GM12878 (cell line): ENCODE measurements at regions of chr11 and their contacts with region 1.

Region 1: GRCh38 chr11:59171508-59172322 is at the start of gene DTX4:
- DNase-seq: peak; percentile 57
- ATAC-seq: peak; percentile 76
- H3K4me3 ChIP-seq: peak within 1 kb of the TSS; percentile 93
- H3K27ac ChIP-seq: peak within 1 kb of the TSS; percentile 84
- H3K4me1 ChIP-seq: peaks cover 6% of the 10 kb centered on the region
- H3K27me3 ChIP-seq: no peaks in the 10 kb centered on the region
- CTCF ChIP-seq: peak; percentile 97 to 98 (median 97)
- EP300 ChIP-seq: no peak
- POLR2A ChIP-seq: 0 out of 2 replicates have a peak, but pooled peaks have one; percentile 69
- RAD21 ChIP-seq: peak; percentile 92
- polyA plus RNA-seq, gene DTX4: 5.9 to 6.9 TPM

Region 2: GRCh38 chr11:58813693-58814092 is 358.0 kb before region 1 on chr11:
- CTCF ChIA-PET with region 1: no interaction called
- POLR2A ChIA-PET with region 1: no interaction called
- RAD21 ChIA-PET with region 1: no interaction called
- SMC1A ChIA-PET with region 1: no interaction called
- in situ Hi-C with region 1: no loop called
- intact Hi-C with region 1: no loop called
- DNase-seq: no peak
- ATAC-seq: no peak
- H3K4me3 ChIP-seq: no peak overlapping the region
- H3K27ac ChIP-seq: no peak overlapping the region
- H3K4me1 ChIP-seq: no peaks in the 10 kb centered on the region
- H3K27me3 ChIP-seq: no peaks in the 10 kb centered on the region
- CTCF ChIP-seq: no peak
- EP300 ChIP-seq: no peak
- POLR2A ChIP-seq: no peak
- RAD21 ChIP-seq: no peak

Region 3: DNA sequence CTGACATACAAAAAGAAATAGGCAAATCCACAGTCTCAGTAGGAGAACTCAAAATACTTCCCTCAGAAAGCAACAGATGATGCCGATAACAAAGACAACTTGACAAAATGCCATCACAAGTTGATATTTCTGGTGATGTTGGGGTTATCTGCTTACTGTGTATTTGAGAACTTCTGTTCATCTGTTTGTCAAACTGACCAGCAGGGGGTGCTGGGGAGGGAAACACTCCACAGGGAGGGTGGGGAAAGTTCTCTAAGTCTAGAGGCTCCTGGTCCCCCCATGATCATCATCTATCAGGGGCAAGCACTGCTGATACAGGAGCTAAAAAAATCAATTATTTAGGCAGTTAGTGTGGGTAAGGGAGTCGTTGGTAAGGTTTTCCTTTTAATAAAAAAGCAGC is 213.2 kb before region 1 on chr11:
- CTCF ChIA-PET with region 1: no interaction called
- POLR2A ChIA-PET with region 1: no interaction called
- RAD21 ChIA-PET with region 1: no interaction called
- SMC1A ChIA-PET with region 1: no interaction called
- in situ Hi-C with region 1: no loop called
- intact Hi-C with region 1: no loop called
- DNase-seq: peak; percentile 2
- ATAC-seq: peak; percentile 92
- H3K4me3 ChIP-seq: no peak overlapping the region
- H3K27ac ChIP-seq: no peak overlapping the region
- H3K4me1 ChIP-seq: peaks cover 3% of the 10 kb centered on the region; the same call in 1 of the 2 replicates
- H3K27me3 ChIP-seq: no peaks in the 10 kb centered on the region
- CTCF ChIP-seq: peak; percentile 46 to 60 (median 51)
- EP300 ChIP-seq: no peak
- POLR2A ChIP-seq: no peak
- RAD21 ChIP-seq: peak; percentile 53

Region 4: GRCh38 chr11:59088162-59088561 is 83.6 kb before region 1 on chr11:
- CTCF ChIA-PET with region 1: no interaction called
- POLR2A ChIA-PET with region 1: no interaction called
- RAD21 ChIA-PET with region 1: no interaction called
- SMC1A ChIA-PET with region 1: no interaction called
- in situ Hi-C with region 1: no loop called
- intact Hi-C with region 1: no loop called
- DNase-seq: no peak
- ATAC-seq: peak; percentile 30; the same call in 1 of the 3 replicates
- H3K4me3 ChIP-seq: no peak overlapping the region
- H3K27ac ChIP-seq: no peak overlapping the region
- H3K4me1 ChIP-seq: no peaks in the 10 kb centered on the region
- H3K27me3 ChIP-seq: no peaks in the 10 kb centered on the region
- CTCF ChIP-seq: no peak
- EP300 ChIP-seq: no peak
- POLR2A ChIP-seq: no peak
- RAD21 ChIP-seq: no peak

Region 5: GRCh38 chr11:59142530-59143507 is 28.9 kb before region 1 on chr11 and contains the start of gene FAM111A:
- CTCF ChIA-PET with region 1: interaction called, 17 read pairs
- POLR2A ChIA-PET with region 1: interaction called, 11 read pairs
- RAD21 ChIA-PET with region 1: interaction called, 9 read pairs
- SMC1A ChIA-PET with region 1: interaction called, 4 read pairs
- in situ Hi-C with region 1: no loop called
- intact Hi-C with region 1: no loop called
- DNase-seq: peak; percentile 69
- ATAC-seq: peak; percentile 85
- H3K4me3 ChIP-seq: peak within 1 kb of the TSS; percentile 83
- H3K27ac ChIP-seq: peak within 1 kb of the TSS; percentile 91
- H3K4me1 ChIP-seq: peaks cover 21% of the 10 kb centered on the region; the same call in 1 of the 2 replicates
- H3K27me3 ChIP-seq: no peaks in the 10 kb centered on the region
- CTCF ChIP-seq: peak; percentile 39 to 54 (median 39)
- EP300 ChIP-seq: no peak
- POLR2A ChIP-seq: peak; percentile 73; the same call in 1 of the 2 replicates
- RAD21 ChIP-seq: peak; percentile 44; the same call in 1 of the 2 replicates
- polyA plus RNA-seq, gene FAM111A: 26.6 to 41.6 TPM

Region 6: DNA sequence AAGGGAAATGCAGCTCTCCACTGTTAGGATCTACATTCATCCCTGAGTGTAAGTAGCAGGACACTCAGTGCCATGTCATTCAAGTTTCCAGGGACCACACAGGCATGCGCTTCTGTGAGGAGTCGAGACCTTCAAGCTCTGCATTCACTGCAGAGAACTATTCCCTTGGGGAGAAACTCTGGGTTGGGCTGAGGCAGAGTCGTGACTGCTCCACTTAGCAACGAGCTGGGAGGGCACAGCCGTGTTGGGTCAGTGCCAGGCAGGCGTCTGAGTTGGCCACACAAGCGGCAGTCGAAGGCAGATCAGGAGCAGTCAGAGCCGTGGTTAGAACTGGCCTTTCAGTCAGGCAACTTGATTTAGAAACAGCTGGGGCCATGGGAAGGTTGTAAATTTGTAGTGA is 26.3 kb after region 1 on chr11:
- CTCF ChIA-PET with region 1: interaction called, 1,180 read pairs
- POLR2A ChIA-PET with region 1: interaction called, 19 read pairs
- RAD21 ChIA-PET with region 1: interaction called, 183 read pairs
- SMC1A ChIA-PET with region 1: interaction called, 155 read pairs
- in situ Hi-C with region 1: no loop called
- intact Hi-C with region 1: loop called (anchors 1 kb)
- DNase-seq: no peak
- ATAC-seq: no peak
- H3K4me3 ChIP-seq: no peak overlapping the region
- H3K27ac ChIP-seq: peak overlapping the region; percentile 94
- H3K4me1 ChIP-seq: peaks cover 35% of the 10 kb centered on the region
- H3K27me3 ChIP-seq: no peaks in the 10 kb centered on the region
- CTCF ChIP-seq: no peak
- EP300 ChIP-seq: no peak
- POLR2A ChIP-seq: no peak
- RAD21 ChIP-seq: no peak

Region 7: DNA sequence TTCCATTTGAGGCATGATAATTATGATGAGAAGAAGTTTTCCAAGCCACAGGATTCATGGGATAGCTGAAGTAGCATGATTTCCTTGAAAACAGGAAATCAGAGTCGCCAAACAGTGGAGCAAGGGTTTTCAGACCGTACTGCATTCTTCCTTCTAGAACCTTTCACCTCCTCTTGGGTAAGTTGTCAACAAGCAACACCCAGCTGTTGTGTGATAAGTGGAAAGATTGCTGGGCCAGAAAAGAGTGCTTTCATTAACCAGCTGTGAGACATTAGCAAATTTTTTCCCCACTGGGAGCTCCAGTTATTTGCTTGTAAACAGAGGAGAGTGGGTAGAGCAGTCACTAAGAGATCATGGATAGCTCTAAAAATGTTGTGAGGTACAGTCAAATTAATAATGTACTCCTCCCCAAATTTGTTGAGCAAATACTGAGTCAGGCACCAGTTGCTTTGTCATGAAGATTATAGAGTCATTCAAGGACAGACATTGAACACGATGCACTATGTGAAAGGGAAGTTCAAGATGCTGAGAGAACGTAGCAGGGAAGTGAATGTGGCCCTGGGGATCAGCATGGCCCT is 52.7 kb after region 1 on chr11:
- CTCF ChIA-PET with region 1: interaction called, 29 read pairs
- POLR2A ChIA-PET with region 1: no interaction called
- RAD21 ChIA-PET with region 1: interaction called, 15 read pairs
- SMC1A ChIA-PET with region 1: interaction called, 4 read pairs
- in situ Hi-C with region 1: no loop called
- intact Hi-C with region 1: no loop called
- DNase-seq: no peak
- ATAC-seq: peak; percentile 49
- H3K4me3 ChIP-seq: no peak overlapping the region
- H3K27ac ChIP-seq: peak overlapping the region; percentile 50
- H3K4me1 ChIP-seq: peaks cover 45% of the 10 kb centered on the region
- H3K27me3 ChIP-seq: no peaks in the 10 kb centered on the region
- CTCF ChIP-seq: no peak
- EP300 ChIP-seq: no peak
- POLR2A ChIP-seq: no peak
- RAD21 ChIP-seq: no peak

Region 8: DNA sequence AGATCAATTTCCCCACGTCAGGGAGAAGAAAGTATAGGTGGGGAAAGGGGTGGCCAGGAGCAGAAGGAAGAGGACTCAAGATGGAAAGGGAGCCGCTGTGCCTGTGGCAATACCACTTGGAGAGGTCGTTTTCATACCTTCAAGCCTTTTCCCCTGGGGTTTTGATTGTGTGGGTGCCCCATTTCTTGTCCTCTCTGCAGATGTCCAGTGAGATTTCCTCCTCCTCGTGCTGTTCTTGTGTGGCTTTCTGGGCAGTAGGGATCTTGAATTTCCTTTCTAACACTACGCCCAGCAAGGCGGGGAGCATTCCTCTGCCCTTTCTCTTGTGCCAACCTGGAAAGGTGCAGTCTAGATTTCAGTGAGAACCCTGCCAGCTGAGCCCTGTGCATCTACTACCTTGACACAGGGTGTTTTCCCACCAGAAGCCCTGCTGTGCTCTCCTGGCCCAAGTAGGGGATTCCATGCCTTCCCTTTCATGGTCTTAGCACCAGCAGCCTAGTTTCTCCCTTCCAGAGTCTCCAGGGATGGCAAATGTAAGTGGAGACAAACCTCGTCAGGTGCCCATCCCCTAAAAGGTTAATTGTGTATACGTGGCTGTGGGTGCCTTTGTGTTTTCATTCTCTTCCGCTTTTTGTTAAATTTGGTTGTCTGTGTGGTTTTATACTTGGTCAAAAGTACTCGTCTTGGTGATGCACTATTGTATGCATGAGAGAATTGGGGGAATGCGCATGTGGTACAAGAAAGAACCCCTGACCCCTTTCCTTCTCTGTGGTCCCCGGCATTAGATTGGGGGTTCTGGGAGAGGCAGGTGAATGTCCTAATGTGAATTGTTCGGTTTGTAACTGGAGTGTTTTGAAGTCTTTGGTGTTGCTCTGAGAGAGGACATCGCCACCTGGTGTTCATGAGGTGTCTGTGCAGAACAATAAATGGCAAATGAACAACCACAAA is 112.4 kb after region 1 on chr11:
- CTCF ChIA-PET with region 1: interaction called, 21 read pairs
- POLR2A ChIA-PET with region 1: no interaction called
- RAD21 ChIA-PET with region 1: interaction called, 19 read pairs
- SMC1A ChIA-PET with region 1: interaction called, 3 read pairs
- in situ Hi-C with region 1: loop called (anchors 5 kb)
- intact Hi-C with region 1: loop called (anchors 1 kb)
- DNase-seq: peak; percentile 71
- ATAC-seq: peak; percentile 86
- H3K4me3 ChIP-seq: peak overlapping the region; percentile 37
- H3K27ac ChIP-seq: peak overlapping the region; percentile 63
- H3K4me1 ChIP-seq: peaks cover 18% of the 10 kb centered on the region
- H3K27me3 ChIP-seq: no peaks in the 10 kb centered on the region
- CTCF ChIP-seq: peak; percentile 81 to 83 (median 82)
- EP300 ChIP-seq: 0 out of 4 replicates have a peak, but pooled peaks of 1 of the 2 experiments have one; percentile 26
- POLR2A ChIP-seq: no peak
- RAD21 ChIP-seq: peak; percentile 84

Region 9: DNA sequence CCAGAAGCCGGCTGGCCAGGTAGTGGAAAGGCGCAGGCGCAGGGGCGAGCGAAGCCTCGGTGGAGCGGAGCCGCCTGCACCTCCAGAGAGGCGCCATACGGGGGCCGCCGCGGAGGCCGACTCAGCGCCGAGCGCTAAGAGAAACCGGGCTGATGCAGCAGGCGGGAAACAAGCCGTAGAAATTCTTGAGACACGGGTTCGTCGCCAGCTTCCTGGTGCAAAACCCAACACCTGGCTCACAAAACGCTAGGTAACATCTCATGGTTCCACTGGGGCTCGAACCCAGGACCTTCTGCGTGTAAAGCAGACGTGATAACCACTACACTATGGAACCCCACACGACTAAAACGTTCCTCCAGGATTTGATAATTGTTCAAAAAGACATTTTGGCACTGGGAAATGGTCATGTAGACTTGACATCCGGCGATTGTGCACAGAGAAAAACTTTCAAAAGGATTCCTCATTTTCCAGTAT is 378.7 kb after region 1 on chr11:
- CTCF ChIA-PET with region 1: no interaction called
- POLR2A ChIA-PET with region 1: no interaction called
- RAD21 ChIA-PET with region 1: no interaction called
- SMC1A ChIA-PET with region 1: no interaction called
- in situ Hi-C with region 1: loop called (anchors 10 kb)
- intact Hi-C with region 1: no loop called
- DNase-seq: peak; percentile 96
- ATAC-seq: peak; percentile 96
- H3K4me3 ChIP-seq: peak overlapping the region; percentile 74
- H3K27ac ChIP-seq: peak overlapping the region; percentile 83
- H3K4me1 ChIP-seq: no peaks in the 10 kb centered on the region
- H3K27me3 ChIP-seq: no peaks in the 10 kb centered on the region
- CTCF ChIP-seq: peak; percentile 39 to 59 (median 57)
- EP300 ChIP-seq: peak in 1 of 2 experiments; percentile 57; a peak in 1 of 4 replicates
- POLR2A ChIP-seq: peak; percentile 40; the same call in 1 of the 2 replicates
- RAD21 ChIP-seq: no peak